RWPE1 (cell line): ENCODE measurements at regions of chr11 and their contacts with region 1.

Region 1: DNA sequence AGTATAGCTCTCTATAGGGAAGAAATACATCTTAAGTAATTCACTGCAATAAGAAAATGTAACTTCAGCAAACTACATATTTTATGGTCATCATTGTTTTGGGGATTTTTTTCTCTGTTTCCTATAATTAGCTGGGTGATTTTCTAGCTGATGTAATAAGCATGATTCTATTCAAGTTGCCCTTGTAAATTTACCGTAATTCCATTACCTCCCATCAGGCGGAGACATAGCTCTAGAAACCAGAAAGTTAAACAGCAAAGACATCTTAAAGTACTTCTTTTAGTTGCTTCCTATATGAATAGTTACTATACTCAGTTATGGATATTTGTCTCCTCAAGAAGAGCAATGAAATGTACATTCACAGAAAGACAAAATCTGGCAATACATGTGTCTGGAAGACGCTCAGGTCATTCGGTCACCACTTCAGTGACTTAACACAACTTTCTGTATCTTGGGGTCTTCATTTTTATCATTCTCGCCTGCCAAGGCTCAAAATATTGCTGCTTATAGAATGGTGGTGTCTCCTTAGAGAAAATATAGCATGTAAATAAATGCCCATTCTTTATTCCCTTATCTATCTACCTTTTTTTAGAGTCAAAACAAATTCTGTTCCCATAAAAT is 239.9 kb upstream of the ZC3H12C start:
- DNase-seq: peak; percentile 18
- H3K27ac ChIP-seq: no peak overlapping the region
- CTCF ChIP-seq: peak; percentile 47

Region 2: DNA sequence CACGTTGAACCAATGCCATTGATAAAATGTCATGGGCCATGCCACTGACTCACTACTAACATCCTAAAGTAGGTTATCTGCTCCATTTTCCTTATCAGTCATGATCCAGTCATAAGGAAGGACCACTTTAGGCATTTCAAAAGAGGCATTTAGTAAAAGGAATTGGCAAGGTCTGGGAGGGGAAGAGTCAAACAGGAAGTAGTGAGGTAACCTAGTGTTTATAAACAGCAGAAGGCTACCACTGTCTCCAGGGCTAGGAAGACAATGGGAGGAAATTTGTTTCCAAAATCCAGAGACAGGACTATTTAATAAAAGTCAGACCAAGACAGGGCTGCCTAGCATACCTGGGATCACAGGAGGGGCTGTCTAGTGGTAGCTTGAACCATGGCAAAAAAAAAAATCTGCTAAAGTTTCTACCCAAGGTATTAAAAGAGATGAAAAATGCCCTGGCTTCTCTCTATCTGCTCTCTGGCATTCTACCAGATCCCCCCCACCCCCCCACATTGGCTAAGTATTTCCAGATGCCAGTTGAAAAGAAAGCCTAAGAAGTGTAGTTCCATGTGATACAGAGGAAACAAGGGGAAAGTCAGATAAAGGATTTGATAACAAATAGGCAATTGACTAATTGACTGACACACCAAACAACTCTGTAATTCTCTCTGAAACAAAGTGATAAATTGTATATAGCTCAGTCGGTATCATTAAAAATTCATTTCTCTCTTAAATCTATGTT is 481.7 kb before region 1 on chr11:
- CTCF ChIA-PET with region 1: no interaction called
- POLR2A ChIA-PET with region 1: no interaction called
- DNase-seq: no peak
- H3K27ac ChIP-seq: no peak overlapping the region
- CTCF ChIP-seq: no peak

Region 3: DNA sequence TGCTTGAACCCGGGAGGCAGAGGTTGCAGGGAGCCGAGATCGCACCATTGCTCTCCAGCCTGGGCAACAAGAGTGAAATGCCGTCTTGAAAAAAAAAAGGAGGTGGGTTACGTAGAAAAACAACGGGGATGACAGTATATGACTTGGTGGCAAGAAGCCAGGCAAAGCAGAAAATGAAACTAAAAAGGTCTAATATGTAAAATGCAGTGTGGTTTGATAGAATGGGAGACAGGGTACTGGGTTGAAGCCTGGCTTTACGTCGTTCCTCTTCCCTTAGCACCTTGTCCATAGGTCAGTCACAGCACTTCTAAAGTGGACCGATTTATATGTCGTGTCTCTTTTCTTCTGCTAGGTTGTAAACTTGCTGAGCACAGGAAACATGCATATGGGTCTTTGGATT is 35.0 kb before region 1 on chr11:
- CTCF ChIA-PET with region 1: no interaction called
- POLR2A ChIA-PET with region 1: no interaction called
- DNase-seq: no peak
- H3K27ac ChIP-seq: no peak overlapping the region
- CTCF ChIP-seq: no peak

Region 4: GRCh38 chr11:109870297-109870696 is 17.0 kb after region 1 on chr11:
- CTCF ChIA-PET with region 1: no interaction called
- POLR2A ChIA-PET with region 1: no interaction called
- DNase-seq: no peak
- H3K27ac ChIP-seq: no peak overlapping the region
- CTCF ChIP-seq: no peak

Region 5: GRCh38 chr11:109939166-109939810 is 86.0 kb after region 1 on chr11:
- CTCF ChIA-PET with region 1: interaction called, 13 read pairs
- POLR2A ChIA-PET with region 1: no interaction called
- DNase-seq: peak; percentile 71
- H3K27ac ChIP-seq: no peak overlapping the region
- CTCF ChIP-seq: peak; percentile 73